ENCODE measurements at regions of chr17 and their contacts with region 1.

Region 1: GRCh38 chr17:75182569-75183450 is at the start of gene SUMO2:
- DNase-seq: peak; percentile 74 to 95 (median 89)

Region 2: GRCh38 chr17:74972107-74972972 is 210.5 kb before region 1 on chr17 and contains the start of gene HID1:
- intact Hi-C with region 1: loop called (anchors 10 kb)
- DNase-seq: peak; percentile 65 to 96 (median 90)

Region 3: DNA sequence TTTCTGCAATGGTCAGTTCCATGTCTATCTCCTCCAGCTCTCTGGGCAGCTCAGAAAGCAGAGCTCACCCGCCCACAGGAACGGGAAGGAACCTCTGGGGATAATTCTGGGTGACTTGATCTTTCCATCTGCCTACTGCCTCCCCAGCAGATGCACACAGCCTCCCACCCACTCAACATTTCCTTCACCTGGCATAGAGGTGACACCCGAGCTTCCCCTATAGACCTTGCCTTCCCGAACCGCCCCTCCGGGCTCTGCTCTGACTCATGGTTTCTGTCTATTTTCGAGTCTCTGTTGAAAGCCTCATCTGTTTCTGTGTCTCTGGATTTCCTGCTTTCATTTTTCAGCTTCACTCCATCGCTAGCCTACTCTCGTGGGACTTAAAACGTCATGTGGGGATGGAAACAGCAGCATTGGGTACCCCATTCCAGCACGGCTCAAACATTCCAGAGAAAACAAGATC is 67.2 kb after region 1 on chr17:
- intact Hi-C with region 1: no loop called
- DNase-seq: peak in 41 of 42 donors; percentile 38 to 92 (median 72)